A549 (cell line): ENCODE measurements at regions of chr2 and their contacts with region 1.

Region 1: DNA sequence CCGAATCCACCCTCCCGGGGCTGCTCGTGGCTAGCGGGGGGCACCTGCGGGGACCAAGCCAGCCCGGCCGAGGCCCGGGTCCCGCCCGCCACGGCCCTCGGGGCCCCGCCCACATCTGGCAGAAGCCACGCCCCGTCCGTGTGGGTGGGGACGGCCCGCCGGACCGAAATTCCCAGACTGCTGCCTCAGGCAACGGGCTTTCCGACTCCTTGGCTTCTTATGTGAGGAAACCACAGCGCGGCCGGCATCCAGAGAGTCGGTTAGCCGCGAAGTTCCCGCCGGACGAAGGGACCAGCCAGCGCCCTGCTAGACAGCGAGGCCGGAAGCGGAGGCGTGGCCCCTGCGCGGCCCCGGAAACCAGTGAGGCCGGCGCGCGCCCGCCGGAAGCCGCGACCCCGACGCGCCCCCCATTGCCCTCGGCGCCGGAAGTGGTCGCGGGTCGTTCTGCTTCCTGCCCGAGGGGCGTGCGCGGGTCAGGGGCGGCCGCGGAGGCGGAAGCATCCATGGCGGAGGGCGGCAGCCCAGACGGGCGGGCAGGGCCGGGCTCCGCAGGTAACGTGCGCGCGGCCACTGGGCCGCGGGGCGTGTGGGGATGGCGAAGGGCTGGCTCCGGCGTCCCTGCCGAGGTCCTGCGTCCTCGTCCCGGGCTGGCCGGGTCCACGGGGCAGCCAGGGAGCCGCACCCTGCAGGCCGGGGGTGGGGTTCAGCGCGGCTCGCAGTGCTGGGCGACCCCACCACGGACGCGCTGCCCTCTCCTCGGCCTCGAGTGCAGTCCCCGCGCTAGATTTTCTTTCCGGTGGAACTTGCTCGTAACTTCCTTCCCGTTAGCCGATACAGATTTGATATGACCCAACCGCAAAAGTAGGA is at the start of gene ASB1:
- DNase-seq: peak; percentile 62 to 76
- ATAC-seq: peak; percentile 85 to 88
- H3K4me3 ChIP-seq: peak within 1 kb of the TSS; percentile 85
- H3K27ac ChIP-seq: peak within 1 kb of the TSS; percentile 94 to 99
- H3K4me1 ChIP-seq: peaks cover 21% of the 10 kb centered on the region; the same call in 2 of the 3 replicates
- CTCF ChIP-seq: no peak
- EP300 ChIP-seq: no peak
- POLR2A ChIP-seq: peak; percentile 46
- RAD21 ChIP-seq: no peak
- polyA plus RNA-seq, gene ASB1: 40.1 and 42.7 TPM in 2 replicates

Region 2: DNA sequence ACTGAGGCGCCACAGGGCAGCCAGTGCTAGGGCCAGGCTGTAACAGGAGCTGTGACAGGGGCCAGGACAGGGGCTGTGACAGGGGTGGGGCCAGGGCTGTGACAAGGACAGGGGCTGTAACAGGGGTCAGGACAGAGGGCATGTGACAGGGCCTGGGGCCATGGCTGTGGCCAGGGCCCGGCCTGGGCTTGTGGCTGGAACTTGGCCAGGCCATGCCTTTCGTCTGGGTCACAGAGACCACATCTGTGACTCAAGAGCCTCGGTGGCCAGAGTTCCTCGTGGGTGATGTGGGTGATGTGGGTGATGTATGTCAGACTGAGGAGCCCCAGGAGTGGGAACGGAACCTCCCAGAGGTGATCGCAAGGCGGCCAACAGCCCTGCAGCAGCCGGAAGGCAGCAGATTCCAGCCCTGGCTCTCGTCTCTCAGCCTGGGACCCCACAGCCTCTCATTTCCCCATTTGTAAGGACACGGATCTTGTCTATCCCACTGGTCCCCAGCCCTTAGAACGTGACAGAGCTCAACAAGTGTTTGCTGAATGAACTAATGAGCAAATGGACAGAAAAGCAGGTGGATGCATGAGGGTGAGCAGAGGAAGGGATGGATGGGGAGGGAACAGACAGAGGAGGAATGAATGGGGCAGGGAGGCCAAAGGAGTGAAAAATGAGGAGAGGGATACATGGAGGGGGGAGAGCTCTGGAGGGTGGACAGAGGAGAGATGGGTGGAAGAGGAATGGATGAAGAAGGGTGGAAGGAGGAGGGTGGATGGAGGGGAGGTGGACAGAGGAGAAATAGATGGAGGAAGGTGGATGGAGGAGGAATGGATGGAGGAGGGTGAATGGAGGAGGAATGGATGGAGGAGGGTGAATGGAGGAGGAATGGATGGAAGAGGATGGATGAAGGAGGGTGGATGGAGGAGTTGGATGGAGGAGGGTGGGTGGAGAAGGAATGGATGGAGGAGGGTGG is 309.3 kb before region 1 on chr2:
- CTCF ChIA-PET with region 1: no interaction called
- POLR2A ChIA-PET with region 1: no interaction called
- DNase-seq: no peak
- ATAC-seq: no peak
- H3K4me3 ChIP-seq: no peak overlapping the region
- H3K27ac ChIP-seq: no peak overlapping the region
- H3K4me1 ChIP-seq: no peaks in the 10 kb centered on the region
- CTCF ChIP-seq: no peak
- EP300 ChIP-seq: no peak
- POLR2A ChIP-seq: no peak
- RAD21 ChIP-seq: no peak

Region 3: GRCh38 chr2:238438856-238439849 is 12.4 kb after region 1 on chr2:
- CTCF ChIA-PET with region 1: interaction called, 10 read pairs
- POLR2A ChIA-PET with region 1: no interaction called
- DNase-seq: peak; percentile 55 to 91
- ATAC-seq: peak; percentile 90 to 92
- H3K4me3 ChIP-seq: peak overlapping the region; percentile 12; the same call in 2 of the 3 replicates
- H3K27ac ChIP-seq: peak overlapping the region; percentile 85 to 87
- H3K4me1 ChIP-seq: peaks cover 63% of the 10 kb centered on the region
- CTCF ChIP-seq: no peak
- EP300 ChIP-seq: peak; percentile 91 to 94; a peak in 3 of 5 replicates
- POLR2A ChIP-seq: no peak
- RAD21 ChIP-seq: peak in 1 of 2 experiments; percentile 33; a peak in 1 of 5 replicates